MCF 10A (cell line): ENCODE measurements at regions of chr3 and their contacts with region 1.

Region 1: DNA sequence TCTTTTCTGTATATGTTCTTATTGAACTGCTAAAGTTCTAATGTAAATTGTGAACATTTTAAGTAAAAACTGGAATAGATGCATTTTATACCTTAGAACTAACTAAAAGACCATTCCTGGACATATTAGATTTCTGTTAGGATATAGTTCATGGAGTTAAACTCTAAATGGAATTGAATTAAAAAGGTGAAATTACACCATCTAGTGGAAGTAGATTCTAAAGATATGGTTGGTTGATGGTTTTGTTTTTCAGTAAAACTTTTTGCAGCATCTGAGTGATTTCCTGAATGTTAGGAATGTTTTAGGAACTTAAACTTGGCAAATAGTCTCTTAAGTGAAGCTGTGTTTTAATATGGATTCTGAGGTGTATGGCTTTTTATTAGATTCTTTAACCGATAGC is 96.8 kb downstream of the SLMAP start:
- DNase-seq: peak; percentile 25
- H3K4me3 Mint-ChIP-seq: no peak overlapping the region
- H3K27ac Mint-ChIP-seq: no peak overlapping the region
- H3K4me1 Mint-ChIP-seq: peaks cover 6% of the 10 kb centered on the region
- H3K27me3 Mint-ChIP-seq: no peaks in the 10 kb centered on the region
- CTCF ChIP-seq: peak; percentile 24

Region 2: GRCh38 chr3:57646723-57647122 is 206.2 kb before region 1 on chr3:
- CTCF ChIA-PET with region 1: interaction called, 9 read pairs
- POLR2A ChIA-PET with region 1: interaction called, 3 read pairs
- intact Hi-C with region 1: loop called (anchors 1 kb)
- DNase-seq: peak; percentile 36
- H3K4me3 Mint-ChIP-seq: no peak overlapping the region
- H3K27ac Mint-ChIP-seq: peak overlapping the region; percentile 80
- H3K4me1 Mint-ChIP-seq: peaks cover 10% of the 10 kb centered on the region
- H3K27me3 Mint-ChIP-seq: no peaks in the 10 kb centered on the region
- CTCF ChIP-seq: peak; percentile 23

Region 3: DNA sequence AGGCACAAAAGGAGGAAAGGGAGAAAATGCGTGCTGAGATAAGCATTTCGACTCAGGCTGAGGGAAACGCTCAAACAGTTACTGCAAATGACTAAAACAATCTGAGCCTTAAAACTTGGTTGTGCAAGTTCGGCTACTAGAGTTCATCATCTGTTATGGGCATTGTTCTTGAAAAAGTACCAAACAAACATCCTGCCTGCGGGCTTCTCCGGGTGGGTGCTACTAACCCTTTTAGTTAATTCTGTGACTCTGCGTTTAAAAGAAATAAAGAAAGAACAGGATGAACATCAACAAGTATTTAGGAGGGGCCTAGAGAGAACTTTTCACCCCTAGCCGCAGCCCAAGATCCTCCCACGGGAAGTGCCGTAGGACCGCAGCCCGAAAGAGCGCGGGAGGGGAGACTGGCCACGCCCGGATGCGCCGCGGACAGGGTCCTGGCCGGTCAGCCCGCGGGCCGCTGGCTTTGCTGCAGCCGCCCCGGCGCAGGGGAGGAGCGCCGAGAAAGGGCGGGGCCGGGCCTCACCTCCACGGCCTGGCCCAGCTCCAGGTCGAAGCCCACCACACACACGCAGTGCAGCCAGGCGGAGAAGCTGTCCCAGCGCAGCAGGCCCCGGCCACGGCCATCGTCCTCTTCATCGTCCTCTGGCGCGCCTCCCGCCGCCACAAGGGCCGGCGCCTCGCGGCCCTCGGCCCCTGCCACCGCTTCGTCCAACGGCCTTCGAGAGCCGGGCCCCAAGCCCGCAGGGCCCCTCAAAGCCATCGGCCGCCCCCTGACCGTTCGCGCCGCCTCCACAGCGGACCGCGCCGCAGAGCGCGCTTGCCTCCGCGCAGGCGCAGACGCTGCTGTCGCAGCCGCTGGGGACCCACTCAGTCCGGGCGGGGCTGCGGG is 160.4 kb before region 1 on chr3 and contains the start of gene DENND6A:
- CTCF ChIA-PET with region 1: interaction called, 3 read pairs
- POLR2A ChIA-PET with region 1: interaction called, 10 read pairs
- intact Hi-C with region 1: no loop called
- DNase-seq: peak; percentile 91
- H3K4me3 Mint-ChIP-seq: peak within 1 kb of the TSS; percentile 80
- H3K27ac Mint-ChIP-seq: peak within 1 kb of the TSS; percentile 71
- H3K4me1 Mint-ChIP-seq: peaks cover 25% of the 10 kb centered on the region
- H3K27me3 Mint-ChIP-seq: no peaks in the 10 kb centered on the region
- CTCF ChIP-seq: no peak
- total RNA-seq, gene DENND6A: 21.2 and 22.3 TPM in 2 replicates

Region 4: GRCh38 chr3:58539626-58540025 is 686.7 kb after region 1 on chr3:
- CTCF ChIA-PET with region 1: no interaction called
- POLR2A ChIA-PET with region 1: no interaction called
- intact Hi-C with region 1: no loop called
- DNase-seq: no peak
- H3K4me3 Mint-ChIP-seq: no peak overlapping the region
- H3K27ac Mint-ChIP-seq: no peak overlapping the region
- H3K4me1 Mint-ChIP-seq: peaks cover 8% of the 10 kb centered on the region
- H3K27me3 Mint-ChIP-seq: peaks cover 6% of the 10 kb centered on the region
- CTCF ChIP-seq: no peak